Dendritic cell treated with granulocyte-macrophage colony-stimulating factor and Interleukin-4, amounts not matched to agents 40 ng/mL and 50 ng/mL, for 4 days (primary cell): ENCODE measurements at regions of chr14 and their contacts with region 1.

Region 1: GRCh38 chr14:24296341-24297157 is 3.0 kb downstream of the DHRS1 start:
- H3K4me3 Mint-ChIP-seq: no peak overlapping the region
- H3K27ac Mint-ChIP-seq: peak overlapping the region; percentile 64
- H3K4me1 Mint-ChIP-seq: peaks cover 38% of the 10 kb centered on the region
- H3K27me3 Mint-ChIP-seq: no peaks in the 10 kb centered on the region

Region 2: DNA sequence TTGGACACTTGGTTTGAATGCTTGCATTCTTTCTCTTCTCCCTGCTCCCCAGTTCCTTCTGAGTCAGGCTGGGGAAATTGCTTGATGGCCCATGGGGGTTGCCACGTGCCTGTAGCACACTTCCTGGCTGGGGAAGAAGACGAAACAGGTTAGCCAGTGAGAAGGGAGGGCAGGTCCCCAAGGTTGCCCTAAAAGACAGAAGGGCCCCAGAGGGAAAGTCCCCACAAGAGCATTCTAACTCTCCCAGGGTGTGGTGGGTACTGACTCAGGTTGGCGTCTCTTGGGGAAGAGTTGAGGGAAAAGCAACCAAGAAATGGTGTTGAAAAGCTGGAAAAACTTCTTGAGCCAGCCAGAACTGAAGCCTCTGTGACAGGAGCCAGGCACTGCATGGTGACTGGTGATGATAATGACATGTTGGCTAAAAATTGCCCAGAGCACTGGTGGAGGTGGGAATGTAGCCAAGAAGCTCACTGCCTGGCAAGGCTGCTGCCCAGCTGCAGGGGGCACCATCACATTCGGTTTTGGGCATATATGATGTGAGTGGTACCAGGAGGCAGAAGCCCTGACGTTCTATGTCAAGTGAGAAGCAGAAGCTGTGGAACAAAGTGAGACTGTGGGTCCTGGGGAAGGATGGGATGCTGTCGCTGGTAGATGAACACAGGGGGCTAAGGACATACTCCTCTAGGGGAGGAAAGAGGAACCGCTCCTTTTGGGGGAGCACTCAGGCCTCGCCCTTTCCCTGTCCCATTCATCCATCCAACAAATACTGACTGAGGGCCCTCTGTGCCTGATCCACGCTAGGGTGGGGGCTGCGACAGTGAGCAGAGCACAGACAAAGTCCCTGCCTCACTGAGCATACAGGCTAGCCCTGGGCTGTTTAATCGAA is 17.0 kb before region 1 on chr14:
- intact Hi-C with region 1: loop called (anchors 1 kb)
- H3K4me3 Mint-ChIP-seq: no peak overlapping the region
- H3K27ac Mint-ChIP-seq: peak overlapping the region; percentile 86
- H3K4me1 Mint-ChIP-seq: peaks cover 87% of the 10 kb centered on the region
- H3K27me3 Mint-ChIP-seq: no peaks in the 10 kb centered on the region